ENCODE measurements at regions of chr19 and their contacts with region 1.

Region 1: DNA sequence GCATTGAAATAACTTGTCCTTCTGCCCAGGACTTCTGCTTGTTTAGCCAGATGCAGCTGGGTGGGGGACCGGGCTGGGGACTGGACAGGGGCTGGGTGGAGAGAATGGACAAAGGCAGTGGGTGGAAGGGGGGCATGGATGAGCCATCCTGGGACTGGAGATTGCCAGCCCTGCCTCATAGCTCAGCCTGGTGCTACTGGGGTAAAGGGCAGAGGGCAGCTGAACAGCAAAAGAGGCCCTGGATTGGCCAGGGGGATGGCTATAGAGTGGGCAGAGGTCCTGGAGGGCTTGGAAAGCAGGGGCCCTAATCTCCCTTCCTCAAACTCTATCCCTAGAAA is 17.7 kb upstream of the PLAUR start:
- DNase-seq: no peak
- CTCF ChIP-seq: no peak

Region 2: GRCh38 chr19:43704002-43704705 is 16.5 kb after region 1 on chr19:
- CTCF ChIA-PET with region 1: no interaction called
- POLR2A ChIA-PET with region 1: interaction called, 11 read pairs
- DNase-seq: no peak
- CTCF ChIP-seq: no peak